HEK293 (cell line): ENCODE measurements at regions of chr20 and their contacts with region 1.

Region 1: GRCh38 chr20:50115591-50116372 is 2.8 kb upstream of the UBE2V1 start:
- H3K4me3 ChIP-seq: peak overlapping the region; percentile 59
- H3K27ac ChIP-seq: no peak overlapping the region; the same call in 1 of the 2 replicates
- H3K4me1 ChIP-seq: peaks cover 5% of the 10 kb centered on the region; the same call in 1 of the 2 replicates
- CTCF ChIP-seq: no peak

Region 2: GRCh38 chr20:50153485-50154377 is 37.9 kb after region 1 on chr20 and contains the start of gene PEDS1:
- CTCF ChIA-PET with region 1: interaction called, 7 read pairs
- POLR2A ChIA-PET with region 1: interaction called, 26 read pairs
- H3K4me3 ChIP-seq: peak within 1 kb of the TSS; percentile 83
- H3K27ac ChIP-seq: peak within 1 kb of the TSS; percentile 83
- H3K4me1 ChIP-seq: peaks cover 4% of the 10 kb centered on the region; the same call in 1 of the 2 replicates
- CTCF ChIP-seq: peak; percentile 45

Region 3: DNA sequence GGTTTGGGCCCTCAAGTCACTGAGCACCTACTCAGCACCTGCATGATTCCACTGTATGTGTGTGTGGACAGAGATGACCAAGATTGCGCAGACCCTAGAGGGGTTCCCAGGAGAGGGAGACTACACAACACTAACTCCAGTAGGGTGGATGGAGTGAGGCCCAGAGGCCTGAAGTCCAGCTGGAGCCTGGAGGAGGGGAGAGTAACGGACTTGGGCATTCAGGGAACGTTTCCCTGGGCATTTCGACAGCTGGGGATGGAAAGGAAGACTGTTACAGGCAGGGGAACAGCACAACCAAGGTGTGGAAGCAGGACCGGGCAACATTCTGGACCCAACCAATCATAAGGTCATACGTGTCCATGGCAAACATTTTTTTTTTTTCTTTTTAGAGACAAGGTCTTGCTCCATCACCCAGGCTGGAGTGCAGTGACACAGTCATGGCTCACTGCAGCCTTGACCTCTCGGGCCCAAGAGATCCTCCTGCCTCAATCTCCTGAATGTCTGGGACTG is 63.8 kb after region 1 on chr20:
- CTCF ChIA-PET with region 1: interaction called, 94 read pairs
- POLR2A ChIA-PET with region 1: interaction called, 10 read pairs
- H3K4me3 ChIP-seq: no peak overlapping the region
- H3K27ac ChIP-seq: no peak overlapping the region
- H3K4me1 ChIP-seq: no peaks in the 10 kb centered on the region
- CTCF ChIP-seq: no peak